GM18951 (cell line): ENCODE measurements at regions of chr1 and their contacts with region 1.

Region 1: DNA sequence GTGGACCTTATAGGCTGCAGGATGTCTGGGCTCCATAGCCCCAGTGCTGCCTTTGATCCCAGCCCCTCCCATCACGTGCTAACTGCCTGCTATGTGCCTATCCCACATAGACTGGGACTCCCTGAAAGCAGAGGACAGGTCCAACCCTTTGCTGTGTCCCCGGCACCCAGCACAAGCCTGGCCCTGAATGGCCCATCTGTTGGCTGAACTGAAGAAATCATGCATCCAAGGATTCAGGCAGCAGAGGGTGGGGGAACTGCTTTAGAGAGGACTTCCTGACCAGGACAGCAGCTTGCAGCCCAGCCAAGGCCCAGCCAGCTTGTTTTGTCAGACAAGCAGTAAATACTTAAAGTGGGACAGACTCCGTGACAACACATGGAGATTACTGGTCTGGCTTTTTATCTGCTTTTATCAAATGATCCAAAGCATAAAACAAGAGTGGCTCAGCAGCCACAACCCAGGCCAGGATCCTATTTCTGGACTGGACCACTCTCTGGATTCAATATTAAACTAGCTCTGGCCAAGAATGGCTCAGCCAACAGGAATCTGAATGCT is 69.2 kb downstream of the GLIS1 start:
- POLR2A ChIP-seq: no peak

Region 2: GRCh38 chr1:53485478-53486394 is 184.0 kb before region 1 on chr1:
- in situ Hi-C with region 1: loop called (anchors 10 kb)
- POLR2A ChIP-seq: no peak